Vagina (tissue), 2 donors: ENCODE measurements at regions of chr1 and their contacts with region 1.

Region 1: GRCh38 chr1:114581335-114582287 is at the start of gene BCAS2:
- DNase-seq: peak; percentile 97 to 99
- H3K4me3 ChIP-seq: peak within 1 kb of the TSS; percentile 61 to 70
- H3K27ac ChIP-seq: peak within 1 kb of the TSS; percentile 96
- H3K4me1 ChIP-seq: peaks cover 39% of the 10 kb centered on the region
- H3K27me3 ChIP-seq: no peaks in the 10 kb centered on the region
- CTCF ChIP-seq: no peak
- POLR2A ChIP-seq: peak in 1 of 2 donors; percentile 89
- total RNA-seq, gene BCAS2: 28.5 TPM

Region 2: DNA sequence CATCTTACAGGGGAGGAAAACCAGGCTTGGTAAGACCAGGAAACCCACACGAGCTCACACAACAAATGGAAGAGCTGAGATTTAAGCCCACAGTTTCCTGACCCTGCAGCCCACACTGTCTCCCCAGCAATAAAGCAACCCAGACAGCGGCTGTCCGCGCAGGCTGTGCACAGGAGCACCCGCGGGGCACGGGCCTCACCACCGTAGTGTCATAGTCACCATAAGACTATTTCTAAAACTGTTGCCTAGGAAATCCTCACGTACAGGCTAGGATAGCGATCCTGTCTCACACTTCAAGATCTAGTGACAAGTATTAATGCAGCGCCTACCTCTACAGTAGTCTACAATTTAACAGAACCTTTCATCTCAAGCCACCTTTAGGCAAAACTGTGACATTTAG is 374.0 kb before region 1 on chr1:
- intact Hi-C with region 1: no loop called
- DNase-seq: no peak
- H3K4me3 ChIP-seq: no peak overlapping the region
- H3K27ac ChIP-seq: no peak overlapping the region
- H3K4me1 ChIP-seq: no peaks in the 10 kb centered on the region
- H3K27me3 ChIP-seq: no peaks in the 10 kb centered on the region
- CTCF ChIP-seq: no peak
- POLR2A ChIP-seq: no peak

Region 3: GRCh38 chr1:114549137-114549536 is 32.5 kb before region 1 on chr1:
- intact Hi-C with region 1: no loop called
- DNase-seq: no peak
- H3K4me3 ChIP-seq: no peak overlapping the region
- H3K27ac ChIP-seq: no peak overlapping the region
- H3K4me1 ChIP-seq: no peaks in the 10 kb centered on the region
- H3K27me3 ChIP-seq: no peaks in the 10 kb centered on the region
- CTCF ChIP-seq: no peak
- POLR2A ChIP-seq: no peak

Region 4: DNA sequence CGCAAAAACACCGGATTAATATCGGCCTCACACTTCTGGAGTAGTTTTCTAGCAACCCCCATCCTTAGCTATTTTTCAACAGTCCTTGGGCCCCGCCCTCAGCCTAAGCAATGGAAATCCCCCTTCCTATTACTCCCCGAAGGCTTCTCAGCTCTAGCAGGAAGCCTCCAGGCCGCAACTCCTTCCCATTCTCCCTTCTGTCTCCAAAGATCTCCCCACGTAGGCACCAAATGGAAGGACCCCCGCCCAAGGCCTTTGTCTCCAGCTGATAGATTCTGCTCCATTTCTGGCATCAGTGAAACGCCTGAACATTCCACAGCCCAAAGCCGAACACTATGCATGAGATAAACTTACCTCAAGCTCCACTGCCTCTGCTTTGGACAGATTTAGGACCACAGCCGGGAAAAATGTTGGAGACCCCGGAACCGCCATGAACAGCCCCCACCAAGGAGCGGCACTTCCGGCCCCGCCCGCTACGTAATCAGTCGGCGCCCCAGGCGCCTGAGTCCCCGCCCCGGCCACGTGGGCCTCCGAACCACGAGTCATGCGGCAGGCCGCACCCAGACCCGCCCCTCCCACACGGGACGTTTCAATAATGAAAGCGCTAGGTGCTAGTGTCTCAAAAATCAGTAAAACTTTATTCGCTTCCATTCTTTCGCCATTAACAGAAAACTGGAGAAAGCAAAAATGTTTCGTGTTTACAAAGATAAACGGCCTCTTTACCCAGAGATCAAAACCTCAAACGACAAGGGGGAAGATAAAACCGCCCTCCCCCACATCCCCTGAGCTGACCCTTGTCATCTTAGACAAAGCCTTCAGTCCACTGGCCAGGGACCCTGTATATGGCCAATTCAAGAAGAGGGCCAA is 134.9 kb after region 1 on chr1 and contains the start of gene NRAS:
- intact Hi-C with region 1: loop called (anchors 5 kb)
- DNase-seq: peak; percentile 94 to 97
- H3K4me3 ChIP-seq: peak within 1 kb of the TSS; percentile 58 to 82
- H3K27ac ChIP-seq: peak within 1 kb of the TSS; percentile 81
- H3K4me1 ChIP-seq: peaks cover 34% of the 10 kb centered on the region
- H3K27me3 ChIP-seq: no peaks in the 10 kb centered on the region
- CTCF ChIP-seq: no peak
- POLR2A ChIP-seq: no peak
- total RNA-seq, gene NRAS: 12.8 TPM